Right ventricle myocardium inferior (tissue), 1 donor: ENCODE measurements at regions of chr21 and their contacts with region 1.

Region 1: DNA sequence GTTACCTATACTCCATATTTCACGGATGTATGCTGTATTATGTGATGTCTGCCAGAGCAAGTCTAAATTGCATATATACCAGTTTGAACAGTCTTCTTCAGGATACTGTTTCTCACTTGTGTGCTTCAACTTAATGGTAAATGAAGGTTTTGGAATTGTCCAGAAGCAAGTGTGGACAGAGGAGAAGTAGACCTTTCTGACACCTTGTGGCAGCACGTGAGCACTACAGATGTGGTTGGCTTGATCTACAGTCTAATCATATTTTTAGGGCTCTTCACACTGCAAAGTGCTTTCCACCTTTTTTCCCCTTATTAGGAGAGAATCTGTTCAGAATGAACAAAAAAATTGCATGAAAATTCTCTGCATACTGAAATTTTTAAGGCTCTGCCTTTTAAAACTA is 10.9 kb downstream of the MORC3 start:
- DNase-seq: no peak
- ATAC-seq: peak; percentile 68

Region 2: DNA sequence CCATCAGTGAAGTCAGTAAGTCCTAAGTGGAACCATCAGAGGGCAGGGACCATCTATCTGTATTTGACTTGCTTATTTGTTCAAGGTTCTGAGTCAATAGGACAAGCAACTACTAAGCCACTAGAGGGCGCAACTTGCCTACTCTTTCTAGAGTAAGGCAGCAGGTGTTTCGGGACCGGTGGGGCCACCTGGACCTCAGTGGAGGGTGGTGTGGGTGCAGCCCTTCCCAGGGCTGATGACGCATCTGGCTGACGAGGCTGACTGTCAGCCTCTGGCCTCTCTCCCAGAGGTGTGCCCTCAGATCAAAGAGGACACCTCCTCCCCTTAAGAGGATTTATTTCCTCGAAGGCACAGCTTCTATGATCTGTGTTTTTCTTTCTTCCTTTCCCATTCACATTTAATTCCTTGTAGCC is 189.4 kb before region 1 on chr21:
- intact Hi-C with region 1: loop called (anchors 5 kb)
- DNase-seq: peak; percentile 78
- ATAC-seq: peak; percentile 75